ENCODE measurements at regions of chr2 and their contacts with region 1.

Region 1: DNA sequence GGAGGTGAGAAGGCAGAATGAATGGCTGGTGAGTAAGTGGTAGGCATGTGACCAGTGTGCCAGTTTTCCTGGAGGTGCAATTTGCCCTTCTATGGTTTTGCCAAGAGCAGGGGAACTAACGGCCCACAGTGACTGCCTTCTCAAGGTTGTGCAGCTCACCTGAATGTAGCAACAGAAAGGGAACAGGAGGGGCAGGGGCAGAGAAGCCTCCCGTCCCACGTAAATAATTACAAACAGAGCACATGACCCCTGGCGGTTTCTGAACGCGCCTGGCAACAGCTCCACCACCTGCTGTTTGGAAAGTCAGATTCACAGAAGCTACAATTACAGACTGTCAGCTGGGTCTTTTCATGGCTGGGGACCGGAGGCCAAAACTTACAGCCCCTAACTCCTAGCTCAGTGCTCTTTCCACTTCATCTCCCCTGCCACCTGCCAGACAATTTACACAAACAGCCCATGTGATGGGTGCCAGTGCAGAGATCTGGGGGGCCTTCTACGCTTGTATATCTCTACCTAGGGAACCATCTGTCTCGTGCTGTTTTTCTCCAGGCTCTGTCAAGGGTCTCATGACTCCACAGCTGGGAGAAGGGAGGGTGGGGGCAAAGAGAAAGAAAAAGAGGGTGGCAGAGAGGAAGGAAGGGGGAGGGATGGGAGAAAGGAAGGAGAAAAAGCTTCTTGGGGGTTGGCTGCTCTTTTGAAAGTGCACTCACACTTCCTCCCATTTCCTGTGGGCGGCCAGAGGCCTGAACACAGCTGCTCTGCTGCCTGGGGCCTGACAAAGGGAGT is 69.6 kb downstream of the POLR1A start:
- DNase-seq: peak; percentile 79
- H3K4me3 Mint-ChIP-seq: peak overlapping the region; percentile 54
- H3K27ac Mint-ChIP-seq: peak overlapping the region; percentile 99
- H3K4me1 Mint-ChIP-seq: peaks cover 71% of the 10 kb centered on the region
- H3K27me3 Mint-ChIP-seq: no peaks in the 10 kb centered on the region

Region 2: DNA sequence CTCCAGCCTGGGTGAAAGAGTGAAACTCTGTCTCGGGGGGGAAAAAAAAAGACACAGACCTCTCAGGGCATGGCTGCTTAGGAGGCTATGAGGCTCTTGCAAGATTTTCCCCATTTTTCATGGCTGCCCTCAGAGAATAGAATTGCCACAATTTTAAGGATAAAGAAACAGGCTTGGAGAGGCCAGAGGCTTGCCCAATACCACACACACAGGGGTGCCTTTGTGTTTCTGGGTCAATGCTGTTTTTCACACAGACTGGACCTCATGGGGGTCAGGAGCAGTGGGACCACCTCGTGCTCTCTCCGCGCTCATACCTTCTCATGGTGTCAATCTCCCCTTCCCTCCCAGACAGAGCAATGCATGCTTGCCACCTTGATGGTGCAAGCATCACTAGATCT is 81.9 kb before region 1 on chr2:
- CTCF ChIA-PET with region 1: no interaction called
- POLR2A ChIA-PET with region 1: no interaction called
- DNase-seq: no peak
- H3K4me3 Mint-ChIP-seq: no peak overlapping the region
- H3K27ac Mint-ChIP-seq: no peak overlapping the region
- H3K4me1 Mint-ChIP-seq: peaks cover 9% of the 10 kb centered on the region
- H3K27me3 Mint-ChIP-seq: peaks cover 3% of the 10 kb centered on the region

Region 3: DNA sequence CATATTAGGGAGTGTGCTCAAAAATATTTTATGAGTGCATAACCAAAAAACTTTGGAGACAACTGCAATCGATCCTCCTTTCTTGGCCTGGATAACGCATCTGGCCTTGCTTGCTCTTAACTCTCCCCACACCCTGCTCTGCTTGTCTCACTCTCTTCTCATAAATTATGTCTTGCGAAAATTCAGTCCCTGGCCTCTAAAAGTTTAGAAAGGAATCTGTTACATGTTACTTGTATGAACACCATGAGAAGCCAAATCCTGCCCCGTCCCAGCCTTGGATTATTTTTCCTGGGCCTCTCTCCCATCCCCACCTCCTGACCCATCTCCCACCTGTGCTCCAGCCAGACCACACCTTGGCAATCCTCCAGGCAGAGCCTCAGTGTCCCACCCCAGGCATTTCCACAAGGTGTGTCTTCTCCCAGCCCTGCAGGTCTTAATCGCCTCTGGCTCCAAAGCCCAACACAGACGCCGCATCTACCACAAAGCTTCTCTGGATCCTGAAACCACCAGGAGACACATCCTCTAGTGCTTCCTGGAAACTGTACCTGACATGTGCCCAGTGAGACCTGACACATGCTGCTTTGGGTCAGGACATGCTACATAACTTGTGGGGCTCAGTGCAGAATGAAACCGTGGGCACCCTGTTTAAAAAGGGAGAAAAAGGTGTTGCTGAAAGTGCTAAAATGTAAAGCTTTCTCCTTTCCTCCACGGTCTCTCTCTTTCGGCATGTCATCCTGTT is 47.7 kb before region 1 on chr2:
- CTCF ChIA-PET with region 1: interaction called, 26 read pairs
- POLR2A ChIA-PET with region 1: interaction called, 110 read pairs
- DNase-seq: no peak
- H3K4me3 Mint-ChIP-seq: no peak overlapping the region
- H3K27ac Mint-ChIP-seq: no peak overlapping the region
- H3K4me1 Mint-ChIP-seq: peaks cover 21% of the 10 kb centered on the region
- H3K27me3 Mint-ChIP-seq: no peaks in the 10 kb centered on the region

Region 4: GRCh38 chr2:86017901-86018896 is 17.9 kb before region 1 on chr2:
- CTCF ChIA-PET with region 1: interaction called, 12 read pairs
- POLR2A ChIA-PET with region 1: interaction called, 9 read pairs
- DNase-seq: no peak
- H3K4me3 Mint-ChIP-seq: no peak overlapping the region
- H3K27ac Mint-ChIP-seq: peak overlapping the region; percentile 89
- H3K4me1 Mint-ChIP-seq: peaks cover 33% of the 10 kb centered on the region
- H3K27me3 Mint-ChIP-seq: no peaks in the 10 kb centered on the region

Region 5: DNA sequence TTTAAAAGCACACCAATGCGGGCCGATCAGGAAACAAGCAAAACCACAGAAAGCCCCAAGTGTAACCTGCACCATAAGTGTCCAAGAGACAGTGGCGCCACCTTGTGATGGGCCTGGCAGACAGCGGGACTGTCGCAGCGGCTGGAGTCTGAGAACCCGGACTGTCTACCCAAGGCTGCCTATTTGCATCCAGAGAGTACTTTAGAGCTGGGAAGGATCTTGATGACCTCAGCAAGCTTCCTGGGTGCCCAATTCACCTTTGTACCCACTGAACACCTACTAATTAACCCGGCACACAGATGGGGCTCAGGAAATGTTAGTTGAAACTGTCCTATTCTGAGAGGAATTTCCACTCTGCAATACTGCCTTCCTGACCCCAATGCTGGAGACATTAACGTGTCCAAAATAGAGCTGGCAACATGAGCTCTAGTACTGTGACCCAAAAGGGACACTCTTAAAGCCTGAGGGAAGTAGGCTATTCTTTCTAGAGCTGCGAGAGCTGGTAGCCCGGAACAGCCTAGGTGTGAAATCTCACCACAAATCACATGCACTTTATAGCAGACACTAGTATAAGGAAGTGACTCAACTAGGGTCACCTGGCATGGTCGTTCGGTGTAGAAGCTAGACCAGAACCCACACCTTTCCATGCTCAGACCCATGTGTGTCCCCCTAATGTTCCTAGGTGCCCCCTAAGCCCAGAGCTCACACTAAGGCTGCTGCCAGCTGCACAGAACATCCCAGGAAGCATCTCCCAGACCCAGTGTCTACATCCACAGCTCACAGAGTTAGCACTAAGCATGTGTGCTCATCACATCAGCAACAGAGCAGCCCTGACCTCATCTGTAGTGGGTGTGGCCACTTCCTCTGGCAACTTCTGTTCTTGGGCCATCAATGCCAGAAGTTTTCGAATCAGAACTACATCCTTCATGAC is 44.2 kb after region 1 on chr2:
- CTCF ChIA-PET with region 1: interaction called, 49 read pairs
- POLR2A ChIA-PET with region 1: interaction called, 28 read pairs
- DNase-seq: peak; percentile 88
- H3K4me3 Mint-ChIP-seq: no peak overlapping the region
- H3K27ac Mint-ChIP-seq: peak overlapping the region; percentile 90
- H3K4me1 Mint-ChIP-seq: peaks cover 48% of the 10 kb centered on the region
- H3K27me3 Mint-ChIP-seq: no peaks in the 10 kb centered on the region

Measured in activated CD4-positive, alpha-beta memory T cell treated with anti-CD3 and anti-CD28 coated beads, Interleukin-2, amount 10 ng/mL, durations not matched to agents 7 days and 5 days (primary cell).